Common myeloid progenitor, CD34-positive (primary cell): ENCODE measurements at regions of chr7 and their contacts with region 1.

Region 1: DNA sequence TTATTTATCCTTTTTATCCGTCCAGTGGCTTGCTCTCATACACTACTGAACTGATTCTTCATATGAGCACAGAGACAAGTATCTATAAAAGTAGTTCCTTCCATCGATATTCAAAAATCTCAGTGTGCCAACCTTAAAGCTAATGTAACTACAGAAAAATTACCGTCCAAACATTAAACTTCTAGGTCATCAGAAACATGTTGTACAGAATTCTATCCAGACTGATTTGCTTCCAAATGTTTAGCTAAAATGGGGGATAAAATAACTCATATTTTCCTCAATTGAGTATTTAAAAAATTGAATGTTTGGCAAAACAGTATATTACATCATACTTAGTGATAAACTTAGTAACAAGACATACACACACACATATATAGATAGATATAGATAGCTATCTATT is 584.7 kb upstream of the SEMA3D start:
- DNase-seq: no peak
- H3K4me3 ChIP-seq: no peak overlapping the region
- H3K27ac ChIP-seq: no peak overlapping the region
- H3K4me1 ChIP-seq: no peaks in the 10 kb centered on the region
- H3K27me3 ChIP-seq: no peaks in the 10 kb centered on the region

Region 2: DNA sequence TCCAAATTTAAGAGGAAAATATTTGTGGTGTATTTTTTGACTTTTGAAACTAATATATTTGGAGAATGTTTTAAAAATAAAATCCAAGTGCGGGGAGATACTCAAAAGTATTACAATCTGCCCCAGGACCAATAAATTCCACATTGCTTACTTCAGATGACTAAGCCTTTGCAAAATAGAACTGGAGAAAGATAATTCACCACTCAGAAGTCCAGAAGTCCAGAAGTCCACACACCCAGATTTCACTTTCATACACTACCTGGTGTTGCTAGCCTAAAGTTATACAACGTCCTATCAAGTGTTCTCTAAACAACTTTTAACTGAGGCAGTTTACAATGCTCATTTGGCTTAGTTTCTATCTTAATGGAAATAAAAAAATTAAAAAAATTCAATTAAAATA is 97.6 kb before region 1 on chr7:
- CTCF ChIA-PET with region 1: no interaction called
- POLR2A ChIA-PET with region 1: no interaction called
- DNase-seq: no peak
- H3K4me3 ChIP-seq: no peak overlapping the region
- H3K27ac ChIP-seq: no peak overlapping the region
- H3K4me1 ChIP-seq: no peaks in the 10 kb centered on the region
- H3K27me3 ChIP-seq: no peaks in the 10 kb centered on the region

Region 3: DNA sequence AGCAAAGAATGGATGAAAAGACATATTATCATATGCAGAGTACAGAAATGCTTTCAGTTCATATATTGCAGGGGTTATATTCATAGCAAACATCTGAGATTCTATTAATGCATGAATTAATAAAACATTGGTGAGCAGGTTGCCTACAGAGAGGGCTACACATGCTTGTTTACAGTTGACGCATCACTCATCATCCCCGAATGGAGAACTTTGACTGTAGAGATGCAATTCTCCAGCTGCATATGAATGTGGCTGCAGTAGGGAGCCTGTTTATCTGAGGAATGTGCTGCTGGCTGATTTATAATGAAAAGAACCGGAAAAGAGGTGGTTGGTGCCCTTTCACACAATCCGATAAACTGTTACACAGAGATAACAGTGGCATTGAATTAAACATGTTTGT is 988.7 kb after region 1 on chr7:
- CTCF ChIA-PET with region 1: no interaction called
- POLR2A ChIA-PET with region 1: interaction called, 15 read pairs
- DNase-seq: peak in 2 of 3 donors; percentile 19 to 40
- H3K4me3 ChIP-seq: no peak overlapping the region
- H3K27ac ChIP-seq: no peak overlapping the region
- H3K4me1 ChIP-seq: no peaks in the 10 kb centered on the region
- H3K27me3 ChIP-seq: no peaks in the 10 kb centered on the region